ENCODE measurements at regions of chr7 and their contacts with region 1.

Region 1: GRCh38 chr7:134676743-134677142 is 30.1 kb downstream of the BPGM start:
- DNase-seq: no peak
- ATAC-seq: no peak
- H3K4me3 ChIP-seq: no peak overlapping the region
- H3K4me3 Mint-ChIP-seq: no peak overlapping the region
- H3K27ac ChIP-seq: no peak overlapping the region
- H3K27ac Mint-ChIP-seq: peak overlapping the region; percentile 70
- H3K4me1 ChIP-seq: no peaks in the 10 kb centered on the region
- H3K4me1 Mint-ChIP-seq: peaks cover 52% of the 10 kb centered on the region
- H3K27me3 ChIP-seq: no peaks in the 10 kb centered on the region
- H3K27me3 Mint-ChIP-seq: no peaks in the 10 kb centered on the region
- CTCF ChIP-seq: no peak

Region 2: DNA sequence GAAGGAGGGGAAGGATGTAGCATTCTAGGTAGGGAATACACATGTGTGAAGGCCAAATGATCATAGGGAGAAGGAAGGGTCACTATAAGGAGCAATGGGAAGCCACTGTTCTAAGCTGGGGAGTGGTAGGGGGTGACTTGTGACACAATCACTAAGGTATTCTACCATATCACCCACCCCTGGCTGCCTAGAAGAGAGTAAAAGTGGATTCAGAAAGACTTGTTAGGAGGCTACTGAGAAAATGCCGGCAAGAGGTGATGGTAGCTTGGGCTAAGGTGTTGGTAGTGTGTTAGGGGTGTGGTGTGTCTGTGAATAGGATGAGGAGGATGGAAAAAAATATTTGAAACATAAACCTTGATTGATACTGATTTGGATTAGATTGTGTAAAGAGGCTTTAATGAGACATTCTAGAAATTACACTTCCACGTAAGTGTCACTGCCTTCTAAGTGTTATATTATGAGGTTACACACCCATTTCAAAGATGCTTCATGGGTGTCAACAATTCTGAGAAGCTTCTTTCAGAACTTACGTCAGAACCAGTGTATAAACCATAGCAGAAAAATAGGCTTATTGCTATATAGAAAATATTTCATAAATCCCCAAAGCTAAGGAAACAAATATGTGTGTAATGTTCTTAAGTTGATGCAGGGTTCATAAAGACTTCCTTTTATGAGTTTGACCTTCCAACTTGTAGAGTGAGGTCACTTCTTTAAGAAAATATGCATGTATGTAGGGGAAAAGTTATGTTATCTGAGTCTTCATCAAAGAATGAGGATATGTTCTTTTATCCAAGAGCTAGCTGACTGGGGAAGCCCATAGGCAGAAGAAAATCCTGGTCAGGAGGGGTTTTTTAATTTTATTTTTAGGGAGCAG is 35.7 kb before region 1 on chr7:
- CTCF ChIA-PET with region 1: interaction called, 31 read pairs
- POLR2A ChIA-PET with region 1: interaction called, 105 read pairs
- intact Hi-C with region 1: loop called in 1 of 2 experiments (anchors 5 kb)
- DNase-seq: peak in 1 of 14 experiments; percentile 54
- ATAC-seq: no peak
- H3K4me3 ChIP-seq: no peak overlapping the region
- H3K4me3 Mint-ChIP-seq: no peak overlapping the region
- H3K27ac ChIP-seq: no peak overlapping the region
- H3K27ac Mint-ChIP-seq: peak overlapping the region; percentile 3
- H3K4me1 ChIP-seq: peaks cover 20% of the 10 kb centered on the region
- H3K4me1 Mint-ChIP-seq: peaks cover 32% of the 10 kb centered on the region
- H3K27me3 ChIP-seq: no peaks in the 10 kb centered on the region
- H3K27me3 Mint-ChIP-seq: no peaks in the 10 kb centered on the region
- CTCF ChIP-seq: no peak

Region 3: GRCh38 chr7:134792968-134793367 is 116.2 kb after region 1 on chr7:
- CTCF ChIA-PET with region 1: no interaction called
- POLR2A ChIA-PET with region 1: no interaction called
- intact Hi-C with region 1: no loop called
- DNase-seq: no peak
- ATAC-seq: no peak
- H3K4me3 ChIP-seq: no peak overlapping the region
- H3K4me3 Mint-ChIP-seq: no peak overlapping the region
- H3K27ac ChIP-seq: no peak overlapping the region
- H3K27ac Mint-ChIP-seq: no peak overlapping the region
- H3K4me1 ChIP-seq: no peaks in the 10 kb centered on the region
- H3K4me1 Mint-ChIP-seq: no peaks in the 10 kb centered on the region
- H3K27me3 ChIP-seq: no peaks in the 10 kb centered on the region
- H3K27me3 Mint-ChIP-seq: no peaks in the 10 kb centered on the region
- CTCF ChIP-seq: no peak

Measured in CD4-positive, alpha-beta T cell (primary cell).